Sigmoid colon (tissue), 7 donors: ENCODE measurements at regions of chr7 and their contacts with region 1.

Region 1: GRCh38 chr7:129644634-129645230 is 33.2 kb downstream of the NRF1 start:
- DNase-seq: no peak
- H3K4me3 ChIP-seq: no peak overlapping the region
- H3K27ac ChIP-seq: no peak overlapping the region
- H3K4me1 ChIP-seq: peaks cover 0 to 9% (median 3%) of the 10 kb centered on the region in 4 donors
- H3K27me3 ChIP-seq: no peaks in the 10 kb centered on the region
- CTCF ChIP-seq: peak in 3 of 4 experiments; percentile 24 to 38 (median 25)
- EP300 ChIP-seq: no peak
- POLR2A ChIP-seq: no peak

Region 2: DNA sequence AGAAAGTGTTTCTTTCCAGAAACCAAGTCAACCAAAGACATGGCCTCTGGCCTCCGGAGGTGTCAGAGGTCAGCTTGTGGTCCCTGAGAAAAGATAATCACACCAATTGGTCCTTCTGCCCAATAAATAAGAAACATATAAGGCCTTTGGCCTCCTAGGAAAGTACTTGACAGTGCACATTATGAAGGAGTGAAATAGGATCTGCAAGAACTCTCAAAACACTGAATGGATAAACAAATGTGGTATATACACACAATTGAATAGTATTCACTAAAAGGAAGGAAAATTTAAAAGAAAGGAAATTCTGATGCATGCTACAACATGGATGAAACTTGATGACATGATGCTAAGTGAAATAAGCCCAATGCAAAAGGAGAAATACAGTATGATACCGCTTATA is 68.6 kb before region 1 on chr7:
- intact Hi-C with region 1: loop called (anchors 5 kb)
- DNase-seq: no peak
- H3K4me3 ChIP-seq: no peak overlapping the region
- H3K27ac ChIP-seq: no peak overlapping the region
- H3K4me1 ChIP-seq: no peaks in the 10 kb centered on the region
- H3K27me3 ChIP-seq: no peaks in the 10 kb centered on the region
- CTCF ChIP-seq: no peak
- EP300 ChIP-seq: no peak
- POLR2A ChIP-seq: no peak